ENCODE measurements at regions of chr5 and their contacts with region 1.

Region 1: GRCh38 chr5:64784451-64785025 is 15.8 kb downstream of the CWC27 start:
- DNase-seq: peak; percentile 76
- ATAC-seq: peak; percentile 57 to 65

Region 2: GRCh38 chr5:64074533-64074932 is 710.0 kb before region 1 on chr5:
- intact Hi-C with region 1: loop called in 1 of 2 experiments (anchors 10 kb)
- DNase-seq: no peak
- ATAC-seq: peak in 1 of 2 donors; percentile 45

Region 3: DNA sequence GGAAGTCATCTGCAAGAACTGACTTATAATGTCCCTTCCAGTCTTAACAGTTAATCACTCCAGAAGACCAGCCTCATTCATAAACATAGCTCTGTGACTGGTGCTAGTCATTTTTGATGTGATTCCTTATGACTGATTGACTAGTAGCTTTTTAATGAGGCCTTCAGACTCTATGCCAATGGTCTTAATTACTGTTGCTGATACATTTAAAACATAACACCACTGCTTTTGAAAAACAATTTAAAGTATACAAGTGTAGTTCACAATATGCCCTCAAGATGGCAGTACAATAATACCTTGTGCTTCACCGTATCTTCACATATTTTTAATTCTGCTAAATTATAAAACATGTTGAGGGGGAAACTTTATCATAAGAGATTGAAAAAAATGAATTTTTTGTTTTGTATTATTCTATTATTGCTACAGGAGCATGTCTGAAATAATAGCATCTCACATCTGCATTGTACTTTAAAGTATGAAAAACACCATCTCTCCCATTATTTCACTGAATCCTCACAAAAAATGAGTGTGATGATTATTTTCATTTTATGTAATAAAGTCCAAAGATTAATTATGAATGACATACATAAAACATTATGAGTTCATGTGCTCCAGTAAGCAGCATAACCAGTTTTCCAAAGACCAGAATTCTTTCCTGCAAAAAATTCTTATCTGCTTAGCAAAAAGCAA is 149.4 kb before region 1 on chr5:
- intact Hi-C with region 1: loop called (anchors 2 to 5 kb)
- DNase-seq: no peak
- ATAC-seq: no peak

Region 4: DNA sequence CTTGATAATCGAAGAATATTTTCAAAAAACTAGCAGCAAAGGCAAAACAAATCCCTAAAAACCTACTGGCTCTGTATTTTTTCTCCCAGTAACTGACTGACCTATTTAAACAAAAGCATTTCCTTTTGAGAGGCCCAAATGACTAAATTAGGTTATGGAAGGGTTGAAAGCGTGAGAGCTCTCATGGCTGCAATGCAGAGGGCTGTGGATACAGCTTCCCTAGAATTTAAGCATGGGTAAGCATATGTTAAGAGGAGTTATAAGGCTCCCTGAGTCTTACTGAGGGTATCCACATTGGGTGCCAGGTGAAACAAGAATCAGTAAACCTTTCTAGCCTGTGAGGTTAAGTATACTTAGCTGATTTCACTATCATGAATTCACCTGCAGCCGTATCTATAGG is 62.0 kb before region 1 on chr5:
- intact Hi-C with region 1: loop called in 1 of 2 experiments (anchors 10 kb)
- DNase-seq: no peak
- ATAC-seq: no peak

Measured in left cardiac atrium (tissue), 4 donors.